ENCODE measurements at regions of chr13 and their contacts with region 1.

Region 1: GRCh38 chr13:31846182-31846950 is 107.0 kb downstream of the RXFP2 start:
- DNase-seq: peak; percentile 94 to 96 (median 95)
- ATAC-seq: peak; percentile 92 to 99 (median 96)
- H3K4me3 ChIP-seq: peak overlapping the region; percentile 70 to 95 (median 79)
- H3K27ac ChIP-seq: peak overlapping the region; percentile 57 to 94 (median 88)
- H3K4me1 ChIP-seq: peaks cover 0 to 43% (median 14%) of the 10 kb centered on the region in 12 donors
- H3K27me3 ChIP-seq: no peaks in the 10 kb centered on the region
- CTCF ChIP-seq: peak in 1 of 12 donors; percentile 7
- POLR2A ChIP-seq: peak; percentile 69 to 93

Region 2: DNA sequence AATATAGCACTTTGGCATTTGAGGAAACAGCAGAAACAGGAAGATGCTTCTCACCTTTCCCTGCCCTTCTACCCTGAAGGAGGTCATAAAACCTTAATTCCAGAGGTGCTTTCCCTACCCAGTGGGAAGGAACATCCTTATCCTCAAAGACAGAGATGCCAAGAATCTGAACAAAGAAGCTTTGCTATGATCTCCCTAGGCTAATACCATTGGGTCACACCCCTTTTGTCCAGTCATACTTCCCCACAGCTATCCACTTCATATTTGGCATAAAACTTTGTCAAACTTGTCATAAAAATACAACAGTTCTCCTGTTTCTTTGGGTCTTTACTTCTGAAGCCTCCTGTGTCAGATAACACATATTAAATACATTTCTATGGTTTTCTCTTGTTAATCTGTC is 128.8 kb before region 1 on chr13:
- intact Hi-C with region 1: no loop called
- DNase-seq: no peak
- ATAC-seq: no peak
- H3K4me3 ChIP-seq: no peak overlapping the region
- H3K27ac ChIP-seq: no peak overlapping the region
- H3K4me1 ChIP-seq: no peaks in the 10 kb centered on the region
- H3K27me3 ChIP-seq: peaks cover 0 to 18% (median 0%) of the 10 kb centered on the region in 9 donors
- CTCF ChIP-seq: no peak
- POLR2A ChIP-seq: no peak

Region 3: GRCh38 chr13:31824705-31825517 is 21.5 kb before region 1 on chr13:
- intact Hi-C with region 1: loop called in 1 of 10 experiments (anchors 1 kb)
- DNase-seq: no peak
- ATAC-seq: peak; percentile 39 to 81 (median 74)
- H3K4me3 ChIP-seq: no peak overlapping the region
- H3K27ac ChIP-seq: no peak overlapping the region
- H3K4me1 ChIP-seq: peaks cover 0 to 6% (median 0%) of the 10 kb centered on the region in 12 donors
- H3K27me3 ChIP-seq: no peaks in the 10 kb centered on the region
- CTCF ChIP-seq: peak; percentile 10 to 64 (median 46)
- POLR2A ChIP-seq: no peak

Region 4: GRCh38 chr13:31885994-31886393 is 39.6 kb after region 1 on chr13:
- intact Hi-C with region 1: loop called in 4 of 10 experiments (anchors 5 kb)
- DNase-seq: peak in 4 of 5 donors; percentile 32 to 58 (median 34)
- ATAC-seq: peak; percentile 41 to 77 (median 68)
- H3K4me3 ChIP-seq: no peak overlapping the region
- H3K27ac ChIP-seq: peak overlapping the region in 9 of 12 donors; percentile 47 to 79 (median 64)
- H3K4me1 ChIP-seq: peaks cover 2 to 85% (median 61%) of the 10 kb centered on the region in 12 donors
- H3K27me3 ChIP-seq: no peaks in the 10 kb centered on the region
- CTCF ChIP-seq: no peak
- POLR2A ChIP-seq: no peak

Region 5: GRCh38 chr13:31896427-31896826 is 50.1 kb after region 1 on chr13:
- intact Hi-C with region 1: loop called in 3 of 10 experiments (anchors 2 to 5 kb)
- DNase-seq: peak in 4 of 5 donors; percentile 33 to 57 (median 45)
- ATAC-seq: peak; percentile 77 to 87 (median 85)
- H3K4me3 ChIP-seq: no peak overlapping the region
- H3K27ac ChIP-seq: peak overlapping the region; percentile 2 to 83 (median 72)
- H3K4me1 ChIP-seq: peaks cover 9 to 79% (median 58%) of the 10 kb centered on the region in 12 donors
- H3K27me3 ChIP-seq: no peaks in the 10 kb centered on the region
- CTCF ChIP-seq: no peak
- POLR2A ChIP-seq: no peak

Region 6: DNA sequence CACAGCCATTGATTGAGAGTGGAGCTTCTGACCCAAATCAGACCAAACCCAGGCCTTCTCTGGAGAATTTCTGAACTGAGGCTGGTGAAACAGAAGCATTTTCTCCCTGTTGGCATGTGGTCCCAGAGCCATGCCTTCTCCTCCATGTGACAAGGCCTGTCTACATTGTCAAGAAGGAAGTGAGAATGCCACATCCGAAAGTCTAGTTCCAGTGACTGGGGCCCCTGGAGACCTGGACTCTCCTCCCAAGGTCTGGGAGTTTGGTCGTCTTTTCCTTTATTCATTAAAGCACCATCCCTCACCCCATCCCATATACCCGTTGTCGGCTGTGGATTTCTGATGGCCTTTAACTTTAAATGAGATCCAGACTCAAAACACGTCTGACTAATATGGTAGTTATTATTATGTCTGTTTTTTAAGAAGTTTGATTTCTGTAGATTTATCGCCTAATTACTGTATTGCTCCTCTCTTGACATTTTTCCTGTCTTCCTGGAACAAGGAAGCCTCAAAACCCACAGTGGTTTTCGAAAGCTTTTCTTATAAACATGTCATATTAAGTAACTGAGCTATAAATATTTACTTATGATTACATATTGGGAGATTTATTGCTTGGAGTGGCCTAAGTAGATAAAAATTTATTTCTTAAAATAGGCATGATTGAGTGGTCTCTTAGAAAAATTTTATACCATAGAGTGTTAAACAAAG is 56.9 kb after region 1 on chr13:
- intact Hi-C with region 1: loop called in 1 of 10 experiments (anchors 5 kb)
- DNase-seq: no peak
- ATAC-seq: no peak
- H3K4me3 ChIP-seq: no peak overlapping the region
- H3K27ac ChIP-seq: peak overlapping the region in 1 of 12 donors; percentile 33
- H3K4me1 ChIP-seq: peaks cover 0 to 67% (median 18%) of the 10 kb centered on the region in 12 donors
- H3K27me3 ChIP-seq: no peaks in the 10 kb centered on the region
- CTCF ChIP-seq: no peak
- POLR2A ChIP-seq: no peak

Measured in heart left ventricle (tissue), 16 donors.